Gastrocnemius medialis (tissue), 4 donors: ENCODE measurements at regions of chr16 and their contacts with region 1.

Region 1: GRCh38 chr16:75206749-75207451 is at the start of gene CTRB2:
- DNase-seq: no peak
- ATAC-seq: peak in 1 of 2 donors; percentile 29
- H3K4me3 ChIP-seq: no peak within 1 kb of the TSS
- H3K27ac ChIP-seq: no peak within 1 kb of the TSS
- H3K4me1 ChIP-seq: no peaks in the 10 kb centered on the region
- H3K27me3 ChIP-seq: no peaks in the 10 kb centered on the region
- CTCF ChIP-seq: no peak
- POLR2A ChIP-seq: no peak
- total RNA-seq, gene CTRB2: 3.0 TPM in 1 of 4 donors, not detected in the others

Region 2: DNA sequence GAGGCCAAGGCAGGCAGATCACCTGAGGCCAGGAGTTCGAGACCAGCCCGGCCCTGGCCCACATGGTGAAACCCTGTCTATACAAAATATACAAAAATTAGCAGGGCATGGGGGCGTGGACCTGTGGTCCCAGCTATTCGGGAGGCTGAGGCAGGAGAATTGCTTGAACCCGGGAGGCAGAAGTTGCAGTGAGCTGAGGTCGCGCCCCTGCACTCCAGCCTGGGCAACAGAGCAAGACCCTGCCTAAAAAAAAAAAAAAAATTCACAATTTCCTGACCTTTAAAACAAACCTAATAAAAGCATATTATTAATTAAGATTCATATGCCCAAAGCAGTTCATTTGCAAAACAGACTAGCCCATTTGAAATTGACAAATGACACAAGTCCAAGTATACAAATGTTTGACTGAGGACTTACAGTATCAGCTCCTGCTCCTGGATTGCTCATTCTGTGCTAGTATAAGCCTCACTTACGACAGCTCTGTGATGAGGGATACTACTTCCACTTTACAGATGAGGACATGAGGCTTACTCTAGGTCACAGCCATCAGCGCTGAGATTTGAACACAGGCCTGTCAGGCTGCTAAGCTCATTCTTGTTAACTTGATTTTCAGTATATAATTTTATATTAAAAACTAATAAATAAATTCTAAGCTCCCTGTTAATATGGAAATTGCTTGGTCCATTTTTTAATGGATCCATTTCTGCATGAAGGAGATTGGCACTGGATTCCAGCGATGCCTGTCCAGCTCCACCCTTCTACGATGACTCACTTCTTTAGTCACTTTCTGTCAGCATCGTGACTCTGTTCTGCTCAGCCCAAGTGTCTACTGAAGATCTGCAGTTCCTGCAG is 310.3 kb before region 1 on chr16:
- in situ Hi-C with region 1: no loop called
- intact Hi-C with region 1: no loop called
- DNase-seq: no peak
- ATAC-seq: no peak
- H3K4me3 ChIP-seq: no peak overlapping the region
- H3K27ac ChIP-seq: no peak overlapping the region
- H3K4me1 ChIP-seq: no peaks in the 10 kb centered on the region
- H3K27me3 ChIP-seq: no peaks in the 10 kb centered on the region
- CTCF ChIP-seq: no peak
- POLR2A ChIP-seq: no peak

Region 3: DNA sequence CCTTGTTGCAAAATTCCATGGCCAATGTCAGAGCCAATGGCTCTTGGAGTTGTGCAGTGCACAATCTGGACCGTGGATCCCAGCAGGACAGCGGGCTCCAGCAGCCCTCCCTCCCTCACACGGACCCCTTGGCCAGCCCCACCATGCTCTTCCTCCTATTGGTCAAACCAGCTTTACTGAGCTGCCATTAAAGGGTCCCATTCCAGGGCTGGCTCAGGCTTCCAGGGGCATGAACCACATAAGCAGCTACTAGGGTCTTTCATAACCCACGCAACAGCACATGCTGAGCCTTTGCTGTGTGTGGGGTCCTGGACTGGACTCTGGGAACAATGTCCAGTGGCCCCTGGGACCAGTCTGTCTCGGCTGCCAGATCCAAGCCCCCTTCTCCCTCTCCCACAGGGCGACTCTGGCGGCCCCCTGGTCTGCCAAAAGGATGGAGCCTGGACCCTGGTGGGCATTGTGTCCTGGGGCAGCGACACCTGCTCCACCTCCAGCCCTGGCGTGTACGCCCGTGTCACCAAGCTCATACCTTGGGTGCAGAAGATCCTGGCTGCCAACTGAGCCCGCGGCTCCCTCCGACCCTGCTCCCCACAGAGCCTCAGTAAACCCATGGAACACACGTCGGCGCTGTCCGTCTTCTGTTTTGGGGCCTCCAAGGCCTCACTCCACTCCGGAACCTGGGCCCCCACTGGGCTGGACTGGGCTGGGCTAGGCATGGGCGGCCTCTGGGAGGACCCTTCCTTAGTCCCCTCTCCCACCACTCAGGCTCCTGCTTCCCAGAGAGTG is 17.6 kb after region 1 on chr16:
- in situ Hi-C with region 1: no loop called
- intact Hi-C with region 1: loop called (anchors 2 kb)
- DNase-seq: no peak
- ATAC-seq: peak in 1 of 2 donors; percentile 36
- H3K4me3 ChIP-seq: no peak overlapping the region
- H3K27ac ChIP-seq: no peak overlapping the region
- H3K4me1 ChIP-seq: no peaks in the 10 kb centered on the region
- H3K27me3 ChIP-seq: no peaks in the 10 kb centered on the region
- CTCF ChIP-seq: no peak
- POLR2A ChIP-seq: no peak

Region 4: DNA sequence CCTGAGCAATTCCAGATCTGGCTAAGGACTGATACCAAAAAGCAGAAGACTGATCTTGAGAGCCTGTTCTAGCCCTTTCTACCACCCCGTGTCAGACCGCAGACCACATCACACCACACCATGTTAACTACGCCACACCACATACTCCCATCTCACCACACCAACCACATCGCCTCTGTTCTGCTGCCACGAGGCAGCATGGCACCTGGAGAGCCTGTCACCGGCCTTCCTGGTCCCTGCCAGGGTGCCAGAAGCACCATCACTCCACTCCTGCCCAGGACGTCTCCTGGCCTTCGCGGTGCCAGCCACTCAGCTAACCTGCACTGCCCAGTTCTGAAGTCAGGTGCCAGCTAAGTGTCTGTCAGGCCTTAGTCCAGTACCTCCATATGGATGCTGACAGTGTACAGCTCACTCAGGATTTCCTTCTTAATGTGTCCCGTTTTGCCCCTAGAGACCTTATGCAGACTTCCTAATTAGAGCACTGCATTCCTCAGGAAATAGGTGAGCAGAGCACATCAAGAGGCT is 81.8 kb after region 1 on chr16:
- in situ Hi-C with region 1: no loop called
- intact Hi-C with region 1: no loop called
- DNase-seq: no peak
- ATAC-seq: no peak
- H3K4me3 ChIP-seq: no peak overlapping the region
- H3K27ac ChIP-seq: peak overlapping the region in 1 of 4 donors; percentile 16
- H3K4me1 ChIP-seq: no peaks in the 10 kb centered on the region
- H3K27me3 ChIP-seq: no peaks in the 10 kb centered on the region
- CTCF ChIP-seq: no peak
- POLR2A ChIP-seq: no peak

Region 5: DNA sequence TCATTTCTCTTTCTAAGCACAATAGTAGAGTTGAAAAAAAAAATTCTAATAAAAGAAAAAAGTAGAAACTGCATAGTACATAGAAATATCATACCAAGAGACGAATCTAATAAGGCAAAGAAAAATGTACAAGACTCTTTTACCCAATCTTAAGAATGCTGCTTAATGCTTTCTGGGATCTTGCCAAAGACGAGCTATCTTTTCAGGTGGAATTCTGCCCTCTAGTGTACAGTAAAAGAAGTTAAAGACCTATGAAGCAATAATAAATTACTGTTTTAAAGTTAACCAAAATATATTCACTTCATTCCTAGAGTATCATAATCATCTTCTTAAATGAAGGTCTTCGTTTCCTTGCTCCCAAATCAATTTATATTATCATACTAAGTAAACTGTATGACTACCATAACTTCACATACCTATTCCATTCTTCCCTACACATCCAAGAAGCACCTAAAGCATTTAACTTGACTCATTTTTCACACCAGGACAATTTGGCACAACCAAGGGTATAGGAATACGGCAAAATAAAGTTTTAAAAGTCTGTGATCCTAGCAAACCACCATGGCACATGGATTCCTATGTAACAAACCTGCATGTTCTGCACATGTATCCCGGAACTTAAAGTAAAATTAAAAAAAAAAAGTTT is 178.7 kb after region 1 on chr16:
- in situ Hi-C with region 1: loop called in 1 of 4 experiments (anchors 5 kb)
- intact Hi-C with region 1: no loop called
- DNase-seq: no peak
- ATAC-seq: peak; percentile 60 to 64
- H3K4me3 ChIP-seq: no peak overlapping the region
- H3K27ac ChIP-seq: peak overlapping the region in 1 of 4 donors; percentile 11
- H3K4me1 ChIP-seq: peaks cover 3 to 4% of the 10 kb centered on the region in 2 donors
- H3K27me3 ChIP-seq: no peaks in the 10 kb centered on the region
- CTCF ChIP-seq: peak; percentile 73 to 94 (median 77)
- POLR2A ChIP-seq: no peak

Region 6: DNA sequence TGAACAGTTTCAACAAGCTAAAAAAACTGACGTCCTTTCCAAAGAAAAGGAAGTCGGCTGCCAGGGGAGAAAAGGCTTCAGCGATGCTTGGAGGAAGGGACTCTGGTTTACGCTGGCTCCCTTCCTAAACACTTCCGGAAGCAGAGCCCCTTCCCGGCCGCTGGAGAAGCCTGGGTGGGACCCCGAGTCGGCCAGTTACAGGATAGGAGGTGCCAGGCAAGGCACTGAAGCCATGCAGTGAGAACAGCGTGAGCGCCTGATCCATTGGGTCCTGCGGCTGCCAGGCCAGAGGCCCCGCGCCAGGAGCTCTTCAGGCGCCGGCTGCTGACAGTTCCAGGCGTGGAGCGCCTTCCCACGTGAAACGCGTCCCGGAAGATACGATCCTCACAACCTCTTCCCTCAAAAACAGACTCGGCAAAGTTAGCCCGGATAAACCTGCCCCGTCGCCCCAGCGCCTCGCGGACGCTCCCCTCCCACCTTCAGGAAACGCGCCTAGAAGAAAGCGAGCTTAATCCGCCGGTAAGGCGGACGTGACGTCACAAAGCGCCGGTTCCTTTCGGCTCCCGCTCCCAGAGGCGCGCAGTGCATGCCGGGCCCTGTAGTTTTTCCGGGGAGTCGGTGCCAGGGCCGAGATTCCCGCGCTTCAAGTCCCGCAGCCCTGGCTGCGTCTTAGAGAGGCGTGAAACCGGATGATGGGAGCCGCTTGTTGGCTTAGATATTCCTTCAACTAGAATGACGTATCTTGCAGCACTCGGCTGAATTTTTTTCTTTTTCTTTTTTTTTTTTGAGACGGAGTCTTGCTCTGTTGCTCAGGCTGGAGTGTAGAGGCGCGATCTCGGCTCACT is 416.1 kb after region 1 on chr16 and contains the start of gene ADAT1:
- in situ Hi-C with region 1: no loop called
- intact Hi-C with region 1: no loop called
- DNase-seq: peak; percentile 97
- ATAC-seq: peak; percentile 95 to 98
- H3K4me3 ChIP-seq: peak within 1 kb of the TSS; percentile 71 to 86 (median 78)
- H3K27ac ChIP-seq: peak within 1 kb of the TSS; percentile 86 to 93 (median 90)
- H3K4me1 ChIP-seq: peaks cover 19 to 20% of the 10 kb centered on the region in 2 donors
- H3K27me3 ChIP-seq: no peaks in the 10 kb centered on the region
- CTCF ChIP-seq: peak in 1 of 5 experiments; percentile 3
- POLR2A ChIP-seq: peak; percentile 85 to 86
- total RNA-seq, gene ADAT1: 14.7 to 44.8 (median 19.0) TPM

Region 7: DNA sequence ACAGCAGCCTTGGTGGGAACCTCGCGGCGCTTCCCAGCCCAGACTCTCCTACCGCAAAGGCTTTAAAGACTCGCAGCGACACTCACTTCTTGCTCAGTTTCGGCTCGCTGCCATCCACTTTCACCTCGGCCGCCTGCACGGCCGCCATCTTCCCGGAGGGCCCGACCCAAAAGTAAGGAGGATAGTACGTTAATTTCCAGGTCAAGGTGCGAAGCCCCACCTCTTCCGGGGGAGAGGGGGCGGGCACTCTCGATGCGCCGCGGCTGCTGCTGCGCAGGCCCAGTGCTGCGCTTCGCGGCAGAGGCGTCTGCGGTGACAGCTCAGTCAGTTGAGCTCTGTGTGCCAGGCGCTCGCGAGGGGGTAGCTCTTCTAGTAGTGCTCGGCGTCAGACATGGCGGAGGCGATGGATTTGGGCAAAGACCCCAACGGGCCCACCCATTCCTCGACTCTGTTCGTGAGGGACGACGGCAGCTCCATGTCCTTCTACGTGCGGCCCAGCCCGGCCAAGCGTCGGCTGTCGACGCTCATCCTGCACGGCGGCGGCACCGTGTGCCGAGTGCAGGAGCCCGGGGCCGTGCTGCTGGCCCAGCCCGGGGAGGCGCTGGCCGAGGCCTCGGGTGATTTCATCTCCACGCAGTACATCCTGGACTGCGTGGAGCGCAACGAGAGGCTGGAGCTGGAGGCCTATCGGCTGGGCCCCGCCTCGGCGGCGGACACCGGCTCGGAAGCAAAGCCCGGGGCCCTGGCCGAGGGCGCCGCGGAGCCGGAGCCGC is 440.8 kb after region 1 on chr16 and contains the starts of genes KARS1 and TERF2IP:
- in situ Hi-C with region 1: no loop called
- intact Hi-C with region 1: loop called (anchors 10 kb)
- DNase-seq: peak; percentile 93 to 94
- ATAC-seq: peak; percentile 92
- H3K4me3 ChIP-seq: peak within 1 kb of the TSS; percentile 85 to 99 (median 92)
- H3K27ac ChIP-seq: peak within 1 kb of the TSS; percentile 95 to 98 (median 97)
- H3K4me1 ChIP-seq: peaks cover 58 to 59% of the 10 kb centered on the region in 2 donors
- H3K27me3 ChIP-seq: no peaks in the 10 kb centered on the region
- CTCF ChIP-seq: no peak
- POLR2A ChIP-seq: peak; percentile 97
- total RNA-seq, gene KARS1: 183 to 251 (median 206) TPM
- total RNA-seq, gene TERF2IP: 44.5 to 73.6 (median 69.7) TPM